Activated T-helper 2 cell treated with anti-CD3 and anti-CD28 coated beads, Interferon-gamma antibody, Interleukin-2, Interleukin-4, amounts not matched to agents 10 μg/mL and 5 μg/mL and 100 μg/mL, durations not matched to agents 14 hours and 24 hours and 36 hours (primary cell): ENCODE measurements at regions of chr16 and their contacts with region 1.

Region 1: GRCh38 chr16:1420111-1420540 is 421 bp downstream of the UQCC4 start:
- DNase-seq: peak; percentile 16
- H3K4me3 Mint-ChIP-seq: peak overlapping the region; percentile 87
- H3K27ac Mint-ChIP-seq: peak overlapping the region; percentile 98
- H3K4me1 Mint-ChIP-seq: peaks cover 4% of the 10 kb centered on the region
- H3K27me3 Mint-ChIP-seq: no peaks in the 10 kb centered on the region

Region 2: DNA sequence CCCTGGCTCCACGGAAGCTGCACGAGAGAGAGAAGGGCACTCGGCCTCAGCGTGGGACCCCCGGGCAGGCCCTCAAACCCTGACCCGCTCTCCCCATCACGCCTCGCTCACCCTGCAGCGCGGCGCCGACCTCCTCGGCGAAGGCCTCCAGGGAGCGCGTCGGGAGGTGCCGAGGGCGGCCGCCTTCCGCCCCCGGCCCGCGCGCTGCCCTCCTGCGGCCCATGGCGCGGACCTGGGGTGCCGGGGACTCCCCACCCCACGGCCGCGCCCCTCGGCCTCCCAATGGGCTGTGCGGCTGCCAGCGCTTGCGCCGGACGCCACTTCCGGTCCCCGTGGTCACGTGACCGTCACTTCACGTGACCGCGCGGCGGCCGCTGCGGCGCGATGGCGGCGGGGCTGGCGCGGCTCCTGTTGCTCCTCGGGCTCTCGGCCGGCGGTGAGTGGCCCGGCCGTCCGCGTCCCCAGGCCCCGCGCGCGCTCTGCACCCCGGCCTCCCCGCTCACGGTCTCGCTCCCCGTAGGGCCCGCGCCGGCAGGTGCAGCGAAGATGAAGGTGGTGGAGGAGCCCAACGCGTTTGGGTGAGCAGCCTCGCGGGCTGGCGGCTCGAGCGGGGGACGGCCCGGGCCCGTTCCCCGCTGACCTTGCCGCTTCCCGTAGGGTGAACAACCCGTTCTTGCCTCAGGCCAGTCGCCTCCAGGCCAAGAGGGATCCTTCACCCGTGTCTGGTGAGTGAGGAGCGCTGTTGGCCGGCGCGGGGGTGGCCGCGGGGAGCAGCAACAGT is 68.4 kb before region 1 on chr16 and contains the starts of genes GNPTG and TSR3:
- intact Hi-C with region 1: loop called (anchors 1 kb)
- DNase-seq: peak; percentile 86
- H3K4me3 Mint-ChIP-seq: peak within 1 kb of the TSS; percentile 86
- H3K27ac Mint-ChIP-seq: peak within 1 kb of the TSS; percentile 72
- H3K4me1 Mint-ChIP-seq: peaks cover 14% of the 10 kb centered on the region
- H3K27me3 Mint-ChIP-seq: no peaks in the 10 kb centered on the region
- total RNA-seq, gene GNPTG: 21.3 and 24.1 TPM in 2 replicates
- total RNA-seq, gene TSR3: 64.1 and 72.9 TPM in 2 replicates

Region 3: DNA sequence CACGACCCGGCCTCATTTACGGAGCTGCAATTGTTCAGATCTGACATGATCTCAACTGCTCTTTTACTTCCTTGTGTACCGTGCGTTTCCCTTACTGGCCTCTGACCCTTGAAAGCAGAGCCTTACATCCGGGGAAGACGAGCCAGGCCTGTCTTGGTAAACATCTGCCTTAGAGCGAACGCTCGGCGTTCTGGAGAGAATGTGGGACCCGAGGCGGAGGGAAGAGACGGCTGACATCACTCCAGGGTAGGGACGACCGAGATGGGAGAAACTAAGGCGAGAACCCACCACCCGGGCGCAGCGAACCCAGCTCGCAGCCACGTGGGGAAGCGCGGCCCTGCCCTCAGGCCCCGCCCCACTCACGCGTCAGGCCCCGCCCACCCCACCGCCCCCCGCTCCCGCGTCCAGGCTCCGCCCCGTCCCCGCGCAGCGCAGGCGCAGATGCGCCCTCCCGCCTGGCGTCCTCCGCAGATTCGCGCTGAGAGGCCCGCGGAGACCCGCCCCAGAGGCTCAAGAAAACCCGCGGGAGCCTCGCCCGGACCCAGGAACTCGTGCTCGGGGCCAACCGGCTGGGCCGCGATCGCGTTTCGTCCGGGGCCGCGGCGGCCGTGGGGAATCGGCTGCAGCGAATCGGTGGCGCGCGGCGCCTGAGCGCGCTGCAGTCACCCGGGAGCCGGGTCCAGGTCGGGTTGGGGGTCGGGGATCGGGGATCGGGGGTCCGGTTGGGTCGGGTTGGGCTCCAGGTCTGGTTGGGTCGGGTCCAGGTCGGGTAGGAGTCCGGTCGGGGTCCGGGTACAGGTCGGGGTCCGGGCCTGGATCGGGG is 73.0 kb after region 1 on chr16 and contains the start of gene TELO2:
- intact Hi-C with region 1: loop called (anchors 2 kb)
- DNase-seq: peak; percentile 84
- H3K4me3 Mint-ChIP-seq: peak within 1 kb of the TSS; percentile 90
- H3K27ac Mint-ChIP-seq: peak within 1 kb of the TSS; percentile 98
- H3K4me1 Mint-ChIP-seq: peaks cover 10% of the 10 kb centered on the region
- H3K27me3 Mint-ChIP-seq: no peaks in the 10 kb centered on the region
- total RNA-seq, gene TELO2: 72.6 and 74.8 TPM in 2 replicates

Region 4: DNA sequence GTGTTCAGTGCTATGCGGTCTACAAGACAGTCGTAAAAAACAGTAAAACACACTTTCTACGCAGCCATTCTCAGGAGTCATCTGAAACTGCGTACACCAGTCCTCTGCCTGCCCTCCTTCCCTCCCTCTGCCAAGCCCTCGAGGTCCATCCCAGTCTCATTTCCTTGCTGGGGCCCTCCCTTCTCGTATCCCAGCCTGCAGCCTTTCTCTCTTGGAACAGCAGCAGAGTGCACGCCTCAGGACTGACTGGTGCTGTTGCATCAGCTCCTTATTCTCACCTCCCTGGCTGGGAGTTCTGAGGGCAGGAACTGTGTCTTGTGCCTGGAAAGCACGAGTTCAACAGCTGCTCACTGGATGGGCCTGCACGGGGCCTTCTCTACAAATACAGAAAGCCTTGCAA is 419.4 kb after region 1 on chr16:
- intact Hi-C with region 1: no loop called
- DNase-seq: no peak
- H3K4me3 Mint-ChIP-seq: no peak overlapping the region
- H3K27ac Mint-ChIP-seq: no peak overlapping the region
- H3K4me1 Mint-ChIP-seq: peaks cover 4% of the 10 kb centered on the region
- H3K27me3 Mint-ChIP-seq: no peaks in the 10 kb centered on the region